Adrenal gland (tissue), 19 donors: ENCODE measurements at regions of chr18 and their contacts with region 1.

Region 1: GRCh38 chr18:31741097-31741735 is 19.5 kb downstream of the SLC25A52 start:
- DNase-seq: peak; percentile 36 to 86 (median 64)
- H3K4me3 ChIP-seq: no peak overlapping the region
- H3K27ac ChIP-seq: no peak overlapping the region
- H3K4me1 ChIP-seq: no peaks in the 10 kb centered on the region
- H3K27me3 ChIP-seq: no peaks in the 10 kb centered on the region
- CTCF ChIP-seq: peak; percentile 78 to 92 (median 88)
- POLR2A ChIP-seq: no peak

Region 2: DNA sequence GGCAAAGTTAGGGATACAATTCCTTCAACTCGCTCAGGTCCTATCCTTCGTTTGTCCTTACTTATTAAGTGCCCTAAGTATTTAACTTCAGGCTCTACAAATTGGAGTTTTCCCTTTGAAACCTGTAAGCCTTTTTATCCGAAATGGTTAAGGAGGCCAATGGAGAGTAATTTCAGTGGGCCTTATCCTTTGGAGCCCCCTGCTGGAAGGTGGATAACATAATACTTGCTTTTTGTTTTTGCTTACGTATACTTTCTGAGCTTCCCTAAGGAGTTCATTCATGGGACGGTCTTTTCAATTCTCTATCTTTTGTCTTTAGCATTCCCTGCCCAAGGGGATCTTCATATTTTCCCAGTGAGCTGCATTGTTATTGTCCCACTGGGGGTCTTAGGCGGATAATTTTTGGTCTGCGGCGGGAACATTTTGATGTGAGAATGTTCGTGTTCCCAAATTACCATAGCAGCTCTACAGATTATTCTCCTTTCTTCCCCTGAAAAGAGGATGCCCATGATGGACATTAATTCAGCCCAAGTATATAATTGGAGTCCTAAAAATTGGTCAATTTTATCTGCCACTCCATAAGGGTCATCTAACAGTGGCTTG is 236.2 kb after region 1 on chr18:
- intact Hi-C with region 1: loop called in 1 of 2 experiments (anchors 10 kb)
- DNase-seq: peak; percentile 32 to 69 (median 45)
- H3K4me3 ChIP-seq: no peak overlapping the region
- H3K27ac ChIP-seq: no peak overlapping the region
- H3K4me1 ChIP-seq: no peaks in the 10 kb centered on the region
- H3K27me3 ChIP-seq: no peaks in the 10 kb centered on the region
- CTCF ChIP-seq: peak; percentile 48 to 73 (median 70)
- POLR2A ChIP-seq: no peak